ENCODE measurements at regions of chr11 and their contacts with region 1.

Region 1: DNA sequence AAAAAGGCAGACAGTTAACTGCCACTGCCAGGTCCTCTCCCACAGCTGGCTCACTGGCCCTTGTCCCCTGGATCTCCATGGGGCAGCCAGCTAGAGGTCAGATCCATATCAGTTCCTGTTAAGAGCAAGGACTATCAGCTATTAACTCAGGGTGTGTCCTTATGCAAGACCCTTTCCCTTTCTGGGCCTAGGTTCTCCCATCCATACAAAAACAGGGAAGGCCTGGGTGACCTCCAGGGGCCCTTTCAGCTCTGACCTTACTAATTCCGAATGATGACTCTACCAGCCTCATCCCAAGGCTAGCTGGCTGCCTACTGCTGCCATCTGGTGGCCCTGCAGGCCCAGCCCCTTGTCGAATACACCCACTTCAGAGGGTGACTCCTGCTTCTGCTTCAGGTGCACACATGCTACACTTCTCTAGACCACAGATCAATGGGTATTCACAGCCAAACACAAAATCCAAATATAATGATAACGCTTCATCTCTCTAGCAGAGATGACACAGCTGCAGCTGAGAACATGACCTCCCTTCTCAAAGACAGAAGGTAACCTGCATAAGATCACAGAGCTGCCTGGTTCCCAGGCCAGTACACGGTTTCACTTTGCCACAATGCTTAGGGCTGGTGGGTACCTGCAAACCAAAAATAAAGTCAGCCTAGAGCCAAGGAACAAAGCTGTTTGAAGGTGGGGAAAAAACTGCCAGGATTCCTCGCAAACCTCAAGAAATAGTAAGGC is 34.1 kb downstream of the SERGEF start:
- DNase-seq: peak; percentile 55
- ATAC-seq: peak; percentile 88

Region 2: DNA sequence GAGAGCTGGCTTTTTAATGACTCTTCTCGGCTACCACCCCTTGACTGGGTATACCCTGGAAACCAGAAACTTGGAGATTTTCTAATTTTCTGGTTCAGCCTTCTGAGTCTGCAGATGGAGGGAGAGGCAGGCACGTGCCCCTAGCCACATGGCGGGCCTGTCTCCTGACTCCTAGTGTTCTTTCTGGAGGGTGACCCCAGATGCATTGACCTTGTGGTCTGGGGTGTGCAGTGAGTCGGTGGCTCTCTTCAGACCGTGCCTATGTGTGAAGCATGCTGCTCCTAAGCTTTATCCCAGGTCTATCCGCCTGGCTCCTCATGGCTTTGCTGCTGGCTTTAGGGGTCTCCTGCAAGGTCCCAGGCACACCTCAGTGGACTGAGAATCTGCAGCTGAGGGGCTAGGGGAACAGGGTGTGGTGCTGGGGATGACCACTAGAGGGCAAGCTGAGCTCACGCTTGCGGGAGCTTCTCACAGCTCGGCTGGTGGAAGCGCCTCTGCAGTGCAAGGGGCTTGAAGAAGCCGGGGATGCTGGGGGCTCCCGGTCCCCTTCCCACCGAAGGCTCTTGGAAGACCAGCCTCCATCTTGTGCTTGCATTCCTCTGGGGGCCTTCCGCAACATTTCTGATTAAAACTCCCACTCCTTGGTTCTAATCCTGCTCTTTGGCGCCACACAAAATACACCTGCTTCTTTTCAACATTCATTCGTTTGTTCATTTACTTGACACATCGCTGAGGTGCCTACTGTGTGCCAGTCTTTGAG is 379.8 kb before region 1 on chr11:
- intact Hi-C with region 1: loop called (anchors 2 kb)
- DNase-seq: peak; percentile 70
- ATAC-seq: peak; percentile 91

Region 3: DNA sequence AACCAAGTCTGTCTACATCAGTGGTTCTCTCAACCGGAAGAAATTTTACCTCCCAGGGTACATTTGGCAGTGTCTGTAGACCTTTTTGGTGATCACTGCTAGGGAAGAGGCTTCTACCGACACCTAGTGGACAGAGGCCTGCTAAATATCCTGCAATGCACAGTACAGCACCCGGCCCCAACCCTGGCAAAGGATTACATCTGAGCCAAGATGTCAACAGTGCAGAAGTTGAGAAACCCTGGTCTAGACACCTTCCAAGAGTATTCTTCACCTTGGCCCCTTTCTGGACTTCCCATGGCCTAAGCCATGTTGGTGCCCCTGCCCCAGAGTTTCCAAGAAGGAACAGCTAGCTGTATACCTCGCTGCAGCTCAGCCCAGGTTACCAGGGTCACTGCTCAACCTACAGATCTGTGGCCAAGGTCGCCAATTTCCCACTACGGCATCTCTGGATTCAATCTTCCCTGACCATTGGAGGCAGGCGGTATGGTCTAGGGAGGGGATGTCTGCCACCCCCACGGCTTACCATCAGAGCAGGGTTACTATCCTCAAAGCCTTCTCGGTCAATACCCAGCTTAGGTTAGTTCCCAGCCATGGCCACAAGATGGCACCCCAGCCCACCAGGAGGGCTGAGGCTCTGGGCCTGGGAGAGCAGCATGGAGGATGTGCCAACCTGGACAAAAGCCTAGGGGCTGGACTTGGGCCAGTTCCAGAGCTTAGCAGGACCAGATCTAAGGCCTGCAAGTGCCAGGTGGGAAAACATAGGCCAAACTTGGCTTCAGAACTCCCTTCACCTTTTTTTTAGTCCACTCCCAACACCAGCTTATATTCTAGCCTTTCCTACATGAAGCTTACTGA is 247.9 kb before region 1 on chr11:
- intact Hi-C with region 1: loop called (anchors 2 kb)
- DNase-seq: peak; percentile 86
- ATAC-seq: peak; percentile 90

Region 4: DNA sequence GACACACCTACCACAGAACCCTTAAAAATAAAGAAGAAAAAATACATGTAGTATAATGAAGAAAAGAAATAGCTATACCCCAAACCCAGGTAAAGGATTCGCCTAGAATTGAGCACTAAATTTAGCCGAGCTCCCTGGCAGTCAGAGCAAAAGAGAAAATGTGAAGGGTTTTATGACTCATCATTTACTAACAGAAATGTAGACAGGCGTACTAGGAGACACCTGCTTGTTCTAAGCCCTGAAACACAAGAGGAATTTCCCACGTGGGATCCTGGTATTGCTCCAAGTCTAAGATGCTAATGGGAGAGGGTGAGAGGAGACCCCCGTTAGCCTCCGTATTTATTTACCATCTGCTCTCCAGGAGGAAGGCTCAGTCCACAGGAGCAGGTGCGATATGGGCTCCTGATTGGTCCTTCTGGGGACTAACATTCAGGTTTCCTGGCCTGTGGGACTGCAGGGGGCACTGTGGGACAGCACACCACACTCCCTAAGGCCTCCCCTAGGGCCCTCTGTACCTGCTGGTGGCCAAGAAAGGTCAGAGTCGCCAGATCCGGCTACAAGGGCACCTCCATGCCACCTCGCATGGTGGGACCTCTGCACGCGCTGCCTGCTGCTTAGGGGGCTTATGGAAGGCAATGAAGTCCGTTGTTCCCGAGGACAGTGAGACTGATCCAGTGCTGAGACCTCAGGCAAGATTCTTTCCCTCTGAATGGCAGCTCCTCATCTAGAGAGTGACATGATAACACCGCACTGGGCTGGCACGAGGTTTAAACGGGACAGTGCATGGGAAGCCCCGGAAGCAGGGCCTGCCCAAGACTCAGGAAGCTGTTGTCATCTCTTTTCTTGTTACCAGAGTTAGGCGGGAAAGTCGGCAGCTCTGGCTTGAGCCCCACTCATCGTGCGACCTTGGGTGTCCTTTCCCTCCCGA is 218.4 kb before region 1 on chr11:
- intact Hi-C with region 1: loop called (anchors 2 kb)
- DNase-seq: peak; percentile 61
- ATAC-seq: peak; percentile 93

Measured in Right ventricle myocardium superior (tissue), 1 donor.